Endothelial cell of umbilical vein (primary cell): ENCODE measurements at regions of chr1 and their contacts with region 1.

Region 1: GRCh38 chr1:9784508-9785133 is 39.1 kb downstream of the CLSTN1 start:
- DNase-seq: peak; percentile 60
- H3K4me3 ChIP-seq: no peak overlapping the region
- H3K27ac ChIP-seq: no peak overlapping the region
- H3K4me1 ChIP-seq: peaks cover 4% of the 10 kb centered on the region
- H3K27me3 ChIP-seq: no peaks in the 10 kb centered on the region
- CTCF ChIP-seq: peak; percentile 48 to 57
- POLR2A ChIP-seq: no peak

Region 2: GRCh38 chr1:9321480-9321849 is 463.2 kb before region 1 on chr1:
- CTCF ChIA-PET with region 1: no interaction called
- POLR2A ChIA-PET with region 1: no interaction called
- dilution Hi-C with region 1: no loop called
- intact Hi-C with region 1: no loop called
- DNase-seq: no peak
- H3K4me3 ChIP-seq: no peak overlapping the region
- H3K27ac ChIP-seq: no peak overlapping the region
- H3K4me1 ChIP-seq: peaks cover 18% of the 10 kb centered on the region
- H3K27me3 ChIP-seq: no peaks in the 10 kb centered on the region
- CTCF ChIP-seq: no peak
- POLR2A ChIP-seq: no peak

Region 3: DNA sequence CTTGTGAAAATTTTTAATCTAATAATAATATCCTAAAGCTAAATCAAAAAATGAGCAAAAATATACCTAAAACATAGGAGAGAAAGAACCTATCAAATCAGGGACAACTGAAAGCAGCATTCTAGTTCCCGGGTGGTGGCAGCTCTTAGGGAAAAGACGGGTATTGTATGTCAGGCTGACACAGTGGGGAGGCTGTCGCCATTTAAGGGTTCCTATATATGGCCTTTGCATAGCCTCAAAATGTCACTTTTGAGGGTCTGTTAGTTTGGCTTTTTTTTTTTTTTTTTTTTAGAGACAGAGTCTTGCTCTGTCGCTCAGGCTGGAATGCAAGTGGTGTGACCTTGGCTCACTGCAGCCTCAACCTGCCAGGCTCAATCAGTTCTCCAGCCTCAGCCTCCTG is 33.1 kb after region 1 on chr1:
- CTCF ChIA-PET with region 1: interaction called, 11 read pairs
- POLR2A ChIA-PET with region 1: no interaction called
- dilution Hi-C with region 1: no loop called
- intact Hi-C with region 1: loop called (anchors 2 kb)
- DNase-seq: no peak
- H3K4me3 ChIP-seq: no peak overlapping the region
- H3K27ac ChIP-seq: no peak overlapping the region
- H3K4me1 ChIP-seq: peaks cover 9% of the 10 kb centered on the region
- H3K27me3 ChIP-seq: no peaks in the 10 kb centered on the region
- CTCF ChIP-seq: no peak
- POLR2A ChIP-seq: no peak

Region 4: DNA sequence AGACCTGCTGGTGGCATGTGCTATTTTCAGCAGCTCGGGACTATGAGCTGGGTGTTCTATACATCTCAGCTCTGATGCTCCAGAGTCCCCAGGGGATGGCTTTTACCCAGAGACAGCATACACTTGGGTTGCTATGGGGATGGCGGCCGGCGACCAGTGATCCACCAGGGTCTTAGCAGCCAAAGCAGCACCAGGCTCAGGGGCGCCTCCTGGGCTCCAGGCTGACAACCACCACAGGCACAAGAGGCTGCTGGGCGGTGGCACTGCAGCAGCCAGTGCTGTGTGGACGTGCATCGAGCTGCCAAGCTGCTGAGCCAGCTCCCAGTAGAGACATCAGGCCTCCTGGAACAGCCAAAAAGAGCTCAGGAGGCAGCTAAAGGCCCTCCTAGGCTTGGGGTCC is 76.7 kb after region 1 on chr1:
- CTCF ChIA-PET with region 1: interaction called, 82 read pairs
- POLR2A ChIA-PET with region 1: no interaction called
- dilution Hi-C with region 1: no loop called
- intact Hi-C with region 1: no loop called
- DNase-seq: no peak
- H3K4me3 ChIP-seq: no peak overlapping the region
- H3K27ac ChIP-seq: no peak overlapping the region
- H3K4me1 ChIP-seq: peaks cover 15% of the 10 kb centered on the region
- H3K27me3 ChIP-seq: no peaks in the 10 kb centered on the region
- CTCF ChIP-seq: no peak
- POLR2A ChIP-seq: no peak

Region 5: GRCh38 chr1:9874959-9875635 is 90.5 kb after region 1 on chr1:
- CTCF ChIA-PET with region 1: interaction called, 64 read pairs
- POLR2A ChIA-PET with region 1: no interaction called
- dilution Hi-C with region 1: no loop called
- intact Hi-C with region 1: no loop called
- DNase-seq: peak; percentile 71
- H3K4me3 ChIP-seq: no peak overlapping the region
- H3K27ac ChIP-seq: no peak overlapping the region
- H3K4me1 ChIP-seq: no peaks in the 10 kb centered on the region
- H3K27me3 ChIP-seq: no peaks in the 10 kb centered on the region
- CTCF ChIP-seq: peak; percentile 85 to 92
- POLR2A ChIP-seq: no peak

Region 6: GRCh38 chr1:9942939-9943788 is 158.5 kb after region 1 on chr1 and contains the starts of genes LZIC and NMNAT1:
- CTCF ChIA-PET with region 1: interaction called, 11 read pairs
- POLR2A ChIA-PET with region 1: no interaction called
- dilution Hi-C with region 1: no loop called
- intact Hi-C with region 1: loop called (anchors 2 kb)
- DNase-seq: peak; percentile 94
- H3K4me3 ChIP-seq: peak within 1 kb of the TSS; percentile 79 to 99 (median 95)
- H3K27ac ChIP-seq: peak within 1 kb of the TSS; percentile 91
- H3K4me1 ChIP-seq: peaks cover 4% of the 10 kb centered on the region
- H3K27me3 ChIP-seq: no peaks in the 10 kb centered on the region
- CTCF ChIP-seq: no peak
- POLR2A ChIP-seq: peak; percentile 96
- total RNA-seq, gene LZIC: 22.7 and 23.4 TPM in 2 replicates
- total RNA-seq, gene NMNAT1: 7.4 and 9.8 TPM in 2 replicates